Aorta (tissue), 5 donors: ENCODE measurements at regions of chr1 and their contacts with region 1.

Region 1: DNA sequence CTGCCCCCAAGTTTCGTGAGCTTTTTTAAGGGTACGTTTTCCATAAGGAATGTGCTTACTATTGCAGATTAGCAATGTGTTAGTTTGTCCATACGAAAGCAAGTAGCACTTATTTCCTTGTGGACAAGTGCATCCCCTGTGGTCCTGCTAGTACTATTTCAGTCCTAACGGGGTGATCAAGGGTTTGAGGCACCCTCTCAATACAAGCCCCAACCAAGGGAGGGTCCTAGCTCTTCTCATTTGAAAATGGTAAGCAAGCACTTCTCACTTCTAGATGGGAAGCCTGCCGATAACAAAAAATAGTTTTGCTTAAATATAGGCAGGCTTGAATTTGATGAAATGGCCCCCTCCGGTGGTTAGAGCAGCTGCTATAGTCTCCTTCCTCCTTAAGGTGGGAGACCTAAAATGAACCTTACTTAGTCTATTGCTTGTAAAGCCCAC is 64.0 kb upstream of the HMCN1 start:
- DNase-seq: no peak
- ATAC-seq: no peak
- H3K4me3 ChIP-seq: no peak overlapping the region
- H3K27ac ChIP-seq: no peak overlapping the region
- H3K4me1 ChIP-seq: no peaks in the 10 kb centered on the region
- H3K27me3 ChIP-seq: no peaks in the 10 kb centered on the region

Region 2: GRCh38 chr1:185238447-185238846 is 431.8 kb before region 1 on chr1:
- intact Hi-C with region 1: loop called in 1 of 2 experiments (anchors 10 kb)
- DNase-seq: no peak
- ATAC-seq: no peak
- H3K4me3 ChIP-seq: no peak overlapping the region
- H3K27ac ChIP-seq: no peak overlapping the region
- H3K4me1 ChIP-seq: no peaks in the 10 kb centered on the region
- H3K27me3 ChIP-seq: no peaks in the 10 kb centered on the region